Activated T-helper 2 cell treated with anti-CD3 and anti-CD28 coated beads, Interferon-gamma antibody, Interleukin-2, Interleukin-4, amounts not matched to agents 10 μg/mL and 5 μg/mL and 100 μg/mL, durations not matched to agents 14 hours and 24 hours and 36 hours (primary cell): ENCODE measurements at regions of chr6 and their contacts with region 1.

Region 1: DNA sequence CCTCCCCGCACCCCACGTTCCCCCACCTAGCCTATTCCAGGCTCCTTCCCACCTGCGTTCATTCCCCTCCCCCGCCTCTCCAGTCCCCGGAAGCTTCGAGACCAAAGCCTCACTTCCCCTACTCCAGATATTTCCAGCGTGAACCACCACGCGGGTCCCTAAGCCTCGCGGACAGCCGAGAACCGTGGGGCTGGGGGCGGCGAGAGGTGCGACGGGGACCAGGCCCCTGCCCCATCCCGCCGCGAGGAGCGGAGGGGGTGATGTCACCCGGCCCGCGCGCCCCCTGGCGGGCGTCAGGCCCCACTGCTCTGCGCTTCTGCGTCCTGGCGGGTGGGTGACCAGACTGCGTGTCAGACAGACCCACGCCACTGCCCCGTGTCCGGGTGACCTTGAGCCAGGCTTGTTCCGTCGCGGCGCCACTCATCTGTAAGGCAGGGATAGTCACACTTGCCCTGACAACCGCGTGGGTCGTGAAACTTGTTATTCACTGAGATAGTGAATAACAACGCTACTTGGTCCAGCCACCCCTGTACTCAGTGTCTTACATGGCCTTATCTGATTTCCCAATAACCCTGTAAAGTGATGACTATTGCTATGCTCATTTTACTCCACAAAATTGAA is 9.0 kb upstream of the HSP90AB1 start:
- DNase-seq: peak; percentile 78
- H3K4me3 Mint-ChIP-seq: peak overlapping the region; percentile 83
- H3K27ac Mint-ChIP-seq: peak overlapping the region; percentile 89
- H3K4me1 Mint-ChIP-seq: peaks cover 48% of the 10 kb centered on the region
- H3K27me3 Mint-ChIP-seq: no peaks in the 10 kb centered on the region

Region 2: GRCh38 chr6:44096612-44097011 is 141.3 kb before region 1 on chr6:
- intact Hi-C with region 1: loop called (anchors 10 kb)
- DNase-seq: peak; percentile 56
- H3K4me3 Mint-ChIP-seq: no peak overlapping the region
- H3K27ac Mint-ChIP-seq: no peak overlapping the region
- H3K4me1 Mint-ChIP-seq: no peaks in the 10 kb centered on the region
- H3K27me3 Mint-ChIP-seq: no peaks in the 10 kb centered on the region

Region 3: DNA sequence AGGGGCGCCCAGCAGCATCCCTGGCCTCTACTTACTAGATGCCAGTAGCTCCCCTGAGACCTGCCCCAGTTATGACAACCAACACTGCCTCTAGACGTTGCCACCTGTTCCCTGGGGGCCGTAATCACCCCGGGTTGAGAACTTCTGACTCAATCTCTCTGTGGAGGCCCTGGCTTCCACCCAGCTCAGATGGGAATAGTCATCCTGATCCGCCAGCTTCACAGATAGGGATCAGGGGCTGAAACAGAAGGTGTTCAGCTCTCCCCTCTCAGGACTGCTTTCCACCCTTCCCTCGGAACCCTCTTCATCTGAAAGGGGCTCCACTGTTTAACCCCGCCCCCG is 76.0 kb before region 1 on chr6:
- intact Hi-C with region 1: loop called (anchors 1 kb)
- DNase-seq: no peak
- H3K4me3 Mint-ChIP-seq: no peak overlapping the region
- H3K27ac Mint-ChIP-seq: peak overlapping the region; percentile 12
- H3K4me1 Mint-ChIP-seq: peaks cover 21% of the 10 kb centered on the region
- H3K27me3 Mint-ChIP-seq: peaks cover 17% of the 10 kb centered on the region

Region 4: GRCh38 chr6:44172731-44173500 is 65.0 kb before region 1 on chr6:
- intact Hi-C with region 1: loop called (anchors 1 kb)
- DNase-seq: peak; percentile 62
- H3K4me3 Mint-ChIP-seq: no peak overlapping the region
- H3K27ac Mint-ChIP-seq: peak overlapping the region; percentile 9
- H3K4me1 Mint-ChIP-seq: peaks cover 18% of the 10 kb centered on the region
- H3K27me3 Mint-ChIP-seq: peaks cover 3% of the 10 kb centered on the region

Region 5: GRCh38 chr6:44190715-44191114 is 47.2 kb before region 1 on chr6:
- intact Hi-C with region 1: loop called (anchors 1 kb)
- DNase-seq: no peak
- H3K4me3 Mint-ChIP-seq: no peak overlapping the region
- H3K27ac Mint-ChIP-seq: no peak overlapping the region
- H3K4me1 Mint-ChIP-seq: peaks cover 26% of the 10 kb centered on the region
- H3K27me3 Mint-ChIP-seq: peaks cover 4% of the 10 kb centered on the region

Region 6: GRCh38 chr6:44217332-44218143 is 20.4 kb before region 1 on chr6:
- intact Hi-C with region 1: no loop called
- DNase-seq: no peak
- H3K4me3 Mint-ChIP-seq: no peak overlapping the region
- H3K27ac Mint-ChIP-seq: no peak overlapping the region
- H3K4me1 Mint-ChIP-seq: peaks cover 23% of the 10 kb centered on the region
- H3K27me3 Mint-ChIP-seq: peaks cover 13% of the 10 kb centered on the region